ENCODE measurements at regions of chr4 and their contacts with region 1.

Region 1: DNA sequence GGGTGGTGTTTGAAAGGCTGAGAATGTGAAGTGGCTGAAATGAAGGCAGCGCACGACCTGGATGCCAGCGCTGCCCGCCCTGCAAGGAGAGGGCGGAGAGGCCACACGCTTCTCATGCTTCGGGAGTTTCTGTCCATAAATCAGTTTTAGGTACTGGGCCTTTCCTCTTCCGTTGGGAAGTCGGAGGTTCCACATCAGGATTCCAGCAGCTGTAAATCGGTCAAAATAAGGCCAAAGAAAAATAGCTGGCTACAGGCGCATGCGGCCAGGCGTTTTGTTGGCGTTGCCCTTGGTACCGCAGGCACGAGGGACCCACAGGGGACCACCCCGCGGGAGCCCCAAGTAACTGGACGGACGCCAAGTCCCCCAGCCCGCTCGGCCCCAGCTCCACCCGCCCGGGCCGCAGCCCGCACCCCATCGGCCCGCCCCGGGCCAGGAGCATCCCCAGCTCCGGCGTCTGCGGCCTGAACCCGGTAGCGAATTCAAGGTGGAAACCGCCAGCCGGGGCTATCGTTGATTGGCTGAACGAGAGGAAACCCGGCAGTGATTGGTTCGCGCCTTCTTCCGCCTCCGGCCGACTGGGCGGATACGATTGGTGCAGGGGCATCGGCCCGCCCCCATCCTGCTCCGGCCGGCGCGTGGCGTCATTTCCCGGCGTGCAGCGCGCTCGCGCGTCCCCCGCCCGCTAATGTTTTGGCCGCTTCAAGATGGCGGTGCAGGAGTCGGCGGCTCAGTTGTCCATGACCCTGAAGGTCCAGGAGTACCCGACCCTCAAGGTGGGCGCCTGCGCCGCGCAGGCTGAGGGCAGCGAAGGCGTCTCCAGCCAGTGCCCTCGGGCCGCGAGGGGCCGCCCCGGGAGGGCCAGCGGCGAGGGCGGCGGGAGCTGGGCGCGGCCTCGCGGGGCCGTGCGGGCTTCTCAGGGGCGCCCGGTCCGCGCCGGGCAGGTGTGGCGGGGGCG is at the start of gene MAEA:
- DNase-seq: peak; percentile 99
- H3K4me3 Mint-ChIP-seq: peak within 1 kb of the TSS; percentile 96
- H3K27ac Mint-ChIP-seq: peak within 1 kb of the TSS; percentile 87
- H3K4me1 Mint-ChIP-seq: peaks cover 31% of the 10 kb centered on the region
- H3K27me3 Mint-ChIP-seq: no peaks in the 10 kb centered on the region
- total RNA-seq, gene MAEA: 47.3 to 50.3 TPM

Region 2: GRCh38 chr4:1130316-1131186 is 158.9 kb before region 1 on chr4:
- CTCF ChIA-PET with region 1: interaction called, 24 read pairs
- POLR2A ChIA-PET with region 1: no interaction called
- intact Hi-C with region 1: loop called (anchors 5 kb)
- DNase-seq: peak; percentile 81
- H3K4me3 Mint-ChIP-seq: no peak overlapping the region
- H3K27ac Mint-ChIP-seq: no peak overlapping the region
- H3K4me1 Mint-ChIP-seq: no peaks in the 10 kb centered on the region
- H3K27me3 Mint-ChIP-seq: peaks cover 2% of the 10 kb centered on the region

Region 3: DNA sequence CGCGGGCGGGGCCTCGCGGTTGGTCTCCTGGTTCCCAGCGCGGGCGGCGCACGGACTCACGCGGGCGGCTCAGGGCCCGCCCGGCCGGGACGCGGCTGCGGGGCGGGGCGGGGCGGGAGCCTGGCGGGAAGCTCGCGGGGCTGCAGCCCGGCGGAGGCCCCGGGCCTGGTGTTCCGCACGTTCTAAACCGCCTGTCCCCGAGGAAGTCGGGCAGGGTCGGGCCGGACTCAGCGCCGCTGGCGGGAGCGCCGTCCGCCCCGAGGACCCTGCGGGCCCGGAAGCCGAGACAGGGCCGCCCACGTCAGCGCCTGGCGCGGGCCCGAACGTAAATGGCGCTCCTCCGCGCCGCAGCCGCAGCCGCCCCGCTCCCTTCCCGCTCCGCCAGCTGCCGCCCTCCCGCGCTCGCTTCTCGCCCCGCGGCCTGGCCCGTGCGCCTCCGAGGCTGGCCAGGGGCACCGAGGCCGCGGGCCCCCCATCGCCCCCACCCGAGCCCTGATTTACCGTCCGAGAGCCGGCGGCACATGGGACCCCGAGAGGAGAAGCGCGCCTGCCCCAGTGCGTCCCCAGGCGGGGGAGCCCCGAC is 40.2 kb before region 1 on chr4:
- CTCF ChIA-PET with region 1: interaction called, 6 read pairs
- POLR2A ChIA-PET with region 1: interaction called, 21 read pairs
- intact Hi-C with region 1: loop called (anchors 1 kb)
- DNase-seq: peak; percentile 85
- H3K4me3 Mint-ChIP-seq: peak overlapping the region; percentile 85
- H3K27ac Mint-ChIP-seq: peak overlapping the region; percentile 96
- H3K4me1 Mint-ChIP-seq: peaks cover 69% of the 10 kb centered on the region
- H3K27me3 Mint-ChIP-seq: no peaks in the 10 kb centered on the region

Region 4: GRCh38 chr4:1300466-1301455 is 11.3 kb after region 1 on chr4:
- CTCF ChIA-PET with region 1: interaction called, 12 read pairs
- POLR2A ChIA-PET with region 1: interaction called, 8 read pairs
- intact Hi-C with region 1: loop called (anchors 2 kb)
- DNase-seq: peak; percentile 77
- H3K4me3 Mint-ChIP-seq: no peak overlapping the region
- H3K27ac Mint-ChIP-seq: peak overlapping the region; percentile 67
- H3K4me1 Mint-ChIP-seq: peaks cover 53% of the 10 kb centered on the region
- H3K27me3 Mint-ChIP-seq: no peaks in the 10 kb centered on the region

Region 5: GRCh38 chr4:1351854-1352633 is 62.6 kb after region 1 on chr4:
- CTCF ChIA-PET with region 1: interaction called, 10 read pairs
- POLR2A ChIA-PET with region 1: interaction called, 25 read pairs
- intact Hi-C with region 1: loop called (anchors 1 kb)
- DNase-seq: peak; percentile 94
- H3K4me3 Mint-ChIP-seq: no peak overlapping the region
- H3K27ac Mint-ChIP-seq: peak overlapping the region; percentile 20
- H3K4me1 Mint-ChIP-seq: peaks cover 31% of the 10 kb centered on the region
- H3K27me3 Mint-ChIP-seq: no peaks in the 10 kb centered on the region